ENCODE measurements at regions of chr11 and their contacts with region 1.

Region 1: DNA sequence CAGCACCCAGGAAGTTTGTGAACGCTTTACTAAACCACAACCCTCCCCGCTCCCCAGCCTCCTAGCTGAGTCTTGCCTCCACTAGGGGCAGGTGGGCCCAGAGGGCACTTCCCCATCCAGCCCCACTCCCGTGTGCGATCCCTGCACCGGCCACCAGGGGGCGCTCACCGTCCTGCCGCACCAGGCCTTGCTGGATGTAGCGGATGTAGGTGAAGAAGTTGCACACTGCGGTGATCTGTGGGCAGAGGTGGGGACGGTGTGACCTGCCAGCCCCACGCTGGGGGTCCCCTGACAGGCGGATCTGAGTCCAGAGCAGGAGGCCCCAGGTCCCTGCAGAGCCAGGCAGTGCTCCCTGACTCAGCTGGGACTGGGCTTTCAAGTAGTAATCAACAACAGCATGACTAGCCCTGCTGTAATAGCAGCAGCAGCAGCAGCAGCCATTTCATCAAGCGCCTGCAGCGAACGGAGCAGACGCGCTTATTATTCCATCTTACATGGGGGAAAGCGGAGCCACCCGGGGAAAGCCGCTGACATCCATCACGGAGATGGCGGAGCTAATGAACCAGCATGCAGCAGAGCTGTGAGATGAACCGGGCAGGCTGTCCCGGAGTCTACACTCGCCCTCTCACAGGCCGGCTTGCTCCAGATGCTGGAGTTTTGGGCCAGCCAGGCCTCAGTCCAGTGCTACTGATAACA is 7.9 kb upstream of the FADS3 start:
- DNase-seq: peak; percentile 86 to 93 (median 87)
- H3K4me3 ChIP-seq: no peak overlapping the region
- H3K4me3 Mint-ChIP-seq: peak overlapping the region in 1 of 7 donors; percentile 5
- H3K27ac ChIP-seq: no peak overlapping the region
- H3K27ac Mint-ChIP-seq: peak overlapping the region in 7 of 8 donors; percentile 3 to 98 (median 44)
- H3K4me1 ChIP-seq: no peaks in the 10 kb centered on the region
- H3K4me1 Mint-ChIP-seq: peaks cover 5 to 11% (median 6%) of the 10 kb centered on the region in 3 donors
- H3K27me3 ChIP-seq: no peaks in the 10 kb centered on the region
- H3K27me3 Mint-ChIP-seq: peaks cover 0 to 4% of the 10 kb centered on the region in 2 donors

Region 2: DNA sequence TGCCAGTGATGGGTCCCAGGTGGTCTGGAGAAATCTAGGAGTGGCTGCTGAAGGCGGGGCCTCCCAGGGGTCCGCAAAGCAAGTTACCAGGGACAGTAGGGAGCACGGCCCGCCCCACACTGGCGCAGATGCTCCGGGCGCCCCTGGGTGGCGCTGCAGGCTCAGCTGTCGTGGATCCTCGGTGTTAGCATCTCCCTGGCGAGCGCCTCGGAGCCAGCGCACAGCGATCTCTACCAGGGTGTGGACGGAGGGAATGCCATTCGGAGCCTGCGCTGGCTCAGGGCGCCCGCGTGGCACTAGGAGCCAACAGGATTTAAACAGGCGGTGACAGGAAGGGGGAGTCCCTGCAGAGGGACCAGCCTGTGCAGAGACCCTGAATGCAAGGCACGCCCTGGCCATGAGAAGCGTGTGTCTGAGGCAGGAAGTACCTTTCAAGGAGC is 28.1 kb before region 1 on chr11:
- CTCF ChIA-PET with region 1: interaction called, 11 read pairs
- POLR2A ChIA-PET with region 1: no interaction called
- DNase-seq: peak; percentile 23 to 64 (median 47)
- H3K4me3 ChIP-seq: no peak overlapping the region
- H3K4me3 Mint-ChIP-seq: peak overlapping the region in 6 of 7 donors; percentile 61 to 74 (median 68)
- H3K27ac ChIP-seq: no peak overlapping the region
- H3K27ac Mint-ChIP-seq: peak overlapping the region in 1 of 8 donors; percentile 55
- H3K4me1 ChIP-seq: peaks cover 8% of the 10 kb centered on the region
- H3K4me1 Mint-ChIP-seq: peaks cover 4 to 7% (median 7%) of the 10 kb centered on the region in 3 donors
- H3K27me3 ChIP-seq: no peaks in the 10 kb centered on the region
- H3K27me3 Mint-ChIP-seq: peaks cover 1 to 9% of the 10 kb centered on the region in 2 donors

Region 3: GRCh38 chr11:61913699-61914395 is 14.6 kb after region 1 on chr11:
- CTCF ChIA-PET with region 1: interaction called, 12 read pairs
- POLR2A ChIA-PET with region 1: no interaction called
- DNase-seq: no peak
- H3K4me3 ChIP-seq: no peak overlapping the region
- H3K4me3 Mint-ChIP-seq: no peak overlapping the region
- H3K27ac ChIP-seq: no peak overlapping the region
- H3K27ac Mint-ChIP-seq: no peak overlapping the region
- H3K4me1 ChIP-seq: no peaks in the 10 kb centered on the region
- H3K4me1 Mint-ChIP-seq: peaks cover 8 to 14% (median 8%) of the 10 kb centered on the region in 3 donors
- H3K27me3 ChIP-seq: peaks cover 13% of the 10 kb centered on the region
- H3K27me3 Mint-ChIP-seq: peaks cover 32 to 43% of the 10 kb centered on the region in 2 donors

Region 4: GRCh38 chr11:61967116-61967923 is 68.0 kb after region 1 on chr11 and contains the start of gene FTH1:
- CTCF ChIA-PET with region 1: interaction called, 12 read pairs
- POLR2A ChIA-PET with region 1: no interaction called
- DNase-seq: peak; percentile 83 to 95 (median 90)
- H3K4me3 ChIP-seq: peak within 1 kb of the TSS; percentile 98
- H3K4me3 Mint-ChIP-seq: peak within 1 kb of the TSS; percentile 95 to 100 (median 95)
- H3K27ac ChIP-seq: peak within 1 kb of the TSS; percentile 94
- H3K27ac Mint-ChIP-seq: peak within 1 kb of the TSS; percentile 96 to 100 (median 98)
- H3K4me1 ChIP-seq: peaks cover 42% of the 10 kb centered on the region
- H3K4me1 Mint-ChIP-seq: peaks cover 55 to 72% (median 60%) of the 10 kb centered on the region in 3 donors
- H3K27me3 ChIP-seq: no peaks in the 10 kb centered on the region
- H3K27me3 Mint-ChIP-seq: peaks cover 0 to 9% of the 10 kb centered on the region in 2 donors
- total RNA-seq, gene FTH1: 490 to 506 TPM